Activated CD4-positive, alpha-beta memory T cell treated with anti-CD3 and anti-CD28 coated beads, Interleukin-2, amount 10 ng/mL, durations not matched to agents 7 days and 5 days (primary cell): ENCODE measurements at regions of chr1 and their contacts with region 1.

Region 1: GRCh38 chr1:101309334-101310311 is 72.8 kb downstream of the S1PR1 start:
- DNase-seq: peak; percentile 72
- H3K4me3 Mint-ChIP-seq: peak overlapping the region; percentile 74
- H3K27ac Mint-ChIP-seq: peak overlapping the region; percentile 92
- H3K4me1 Mint-ChIP-seq: peaks cover 62% of the 10 kb centered on the region
- H3K27me3 Mint-ChIP-seq: peaks cover 15% of the 10 kb centered on the region

Region 2: DNA sequence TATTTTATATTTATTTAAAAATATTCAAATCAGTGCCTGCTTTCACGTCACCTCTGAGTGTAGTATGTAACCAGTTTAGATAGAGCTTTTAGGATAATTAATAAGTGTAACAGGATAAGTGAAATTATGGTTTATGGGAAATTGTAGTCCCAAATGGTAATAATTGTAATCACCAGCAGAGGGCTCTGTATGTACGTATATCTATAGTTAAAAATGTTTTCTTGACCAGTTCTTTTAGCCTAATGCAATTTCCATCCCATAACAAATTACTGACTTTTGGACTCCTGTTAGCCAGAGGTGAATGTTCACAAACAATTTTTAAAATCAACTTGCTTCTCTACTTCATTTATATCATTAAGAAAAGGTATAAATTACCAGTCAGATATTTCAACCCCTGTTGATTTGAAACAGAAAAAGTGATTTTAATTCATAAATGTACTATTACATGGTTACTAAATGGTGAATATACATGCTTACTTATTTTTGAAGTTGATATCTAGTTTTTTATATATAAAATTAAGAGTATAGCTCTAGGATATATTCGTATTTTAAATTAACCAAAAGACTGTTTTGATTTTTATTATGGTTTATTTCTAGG is 388.4 kb before region 1 on chr1:
- CTCF ChIA-PET with region 1: interaction called, 11 read pairs
- POLR2A ChIA-PET with region 1: interaction called, 3 read pairs
- DNase-seq: no peak
- H3K4me3 Mint-ChIP-seq: no peak overlapping the region
- H3K27ac Mint-ChIP-seq: no peak overlapping the region
- H3K4me1 Mint-ChIP-seq: peaks cover 32% of the 10 kb centered on the region
- H3K27me3 Mint-ChIP-seq: no peaks in the 10 kb centered on the region

Region 3: DNA sequence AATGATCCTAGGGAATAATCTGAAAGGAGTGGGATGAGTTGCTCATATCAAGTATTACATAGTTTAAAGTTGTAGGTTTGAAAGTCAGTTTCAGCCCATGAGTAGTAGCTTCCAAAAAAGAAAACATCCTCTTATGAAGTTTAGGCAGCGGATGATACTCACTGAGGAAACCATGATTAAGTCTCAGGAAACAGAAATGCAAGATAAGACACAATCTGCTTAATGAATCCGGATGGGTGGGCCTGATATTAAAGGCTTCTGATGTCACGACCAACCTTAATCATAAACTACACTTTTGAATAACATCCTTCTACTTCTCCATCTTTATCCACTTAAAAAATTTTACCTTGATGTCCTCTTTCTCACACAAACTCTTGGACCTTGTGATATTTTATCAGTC is 11.0 kb before region 1 on chr1:
- CTCF ChIA-PET with region 1: interaction called, 72 read pairs
- POLR2A ChIA-PET with region 1: interaction called, 34 read pairs
- DNase-seq: no peak
- H3K4me3 Mint-ChIP-seq: no peak overlapping the region
- H3K27ac Mint-ChIP-seq: no peak overlapping the region
- H3K4me1 Mint-ChIP-seq: peaks cover 42% of the 10 kb centered on the region
- H3K27me3 Mint-ChIP-seq: peaks cover 24% of the 10 kb centered on the region

Region 4: GRCh38 chr1:101338714-101339430 is 29.2 kb after region 1 on chr1:
- CTCF ChIA-PET with region 1: interaction called, 13 read pairs
- POLR2A ChIA-PET with region 1: interaction called, 3 read pairs
- DNase-seq: no peak
- H3K4me3 Mint-ChIP-seq: no peak overlapping the region
- H3K27ac Mint-ChIP-seq: no peak overlapping the region
- H3K4me1 Mint-ChIP-seq: peaks cover 17% of the 10 kb centered on the region
- H3K27me3 Mint-ChIP-seq: peaks cover 5% of the 10 kb centered on the region

Region 5: GRCh38 chr1:101357444-101357986 is 47.9 kb after region 1 on chr1:
- CTCF ChIA-PET with region 1: interaction called, 152 read pairs
- POLR2A ChIA-PET with region 1: interaction called, 19 read pairs
- DNase-seq: peak; percentile 70
- H3K4me3 Mint-ChIP-seq: no peak overlapping the region
- H3K27ac Mint-ChIP-seq: no peak overlapping the region
- H3K4me1 Mint-ChIP-seq: peaks cover 8% of the 10 kb centered on the region
- H3K27me3 Mint-ChIP-seq: peaks cover 18% of the 10 kb centered on the region

Region 6: DNA sequence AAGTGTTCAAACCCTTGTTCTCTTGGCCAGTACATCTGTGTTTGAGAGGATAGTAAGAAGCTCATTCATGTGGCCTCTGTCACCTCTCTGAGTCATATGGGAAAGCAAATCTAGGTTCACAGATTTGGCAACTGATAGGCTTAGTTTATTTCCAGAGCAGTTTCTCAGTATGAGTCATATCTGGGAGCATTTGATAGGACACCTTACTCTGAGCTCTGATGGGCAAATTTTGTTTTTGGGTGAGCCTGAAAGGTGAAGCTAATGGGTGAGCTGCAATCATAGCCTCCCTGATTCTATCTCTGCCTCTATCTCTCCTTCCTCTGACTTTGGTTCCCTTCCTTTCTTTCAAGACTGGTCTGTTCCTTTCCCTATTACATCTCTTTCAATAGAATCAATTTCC is 61.6 kb after region 1 on chr1:
- CTCF ChIA-PET with region 1: interaction called, 16 read pairs
- POLR2A ChIA-PET with region 1: interaction called, 6 read pairs
- DNase-seq: peak; percentile 19
- H3K4me3 Mint-ChIP-seq: no peak overlapping the region
- H3K27ac Mint-ChIP-seq: peak overlapping the region; percentile 13
- H3K4me1 Mint-ChIP-seq: peaks cover 17% of the 10 kb centered on the region
- H3K27me3 Mint-ChIP-seq: peaks cover 9% of the 10 kb centered on the region

Region 7: DNA sequence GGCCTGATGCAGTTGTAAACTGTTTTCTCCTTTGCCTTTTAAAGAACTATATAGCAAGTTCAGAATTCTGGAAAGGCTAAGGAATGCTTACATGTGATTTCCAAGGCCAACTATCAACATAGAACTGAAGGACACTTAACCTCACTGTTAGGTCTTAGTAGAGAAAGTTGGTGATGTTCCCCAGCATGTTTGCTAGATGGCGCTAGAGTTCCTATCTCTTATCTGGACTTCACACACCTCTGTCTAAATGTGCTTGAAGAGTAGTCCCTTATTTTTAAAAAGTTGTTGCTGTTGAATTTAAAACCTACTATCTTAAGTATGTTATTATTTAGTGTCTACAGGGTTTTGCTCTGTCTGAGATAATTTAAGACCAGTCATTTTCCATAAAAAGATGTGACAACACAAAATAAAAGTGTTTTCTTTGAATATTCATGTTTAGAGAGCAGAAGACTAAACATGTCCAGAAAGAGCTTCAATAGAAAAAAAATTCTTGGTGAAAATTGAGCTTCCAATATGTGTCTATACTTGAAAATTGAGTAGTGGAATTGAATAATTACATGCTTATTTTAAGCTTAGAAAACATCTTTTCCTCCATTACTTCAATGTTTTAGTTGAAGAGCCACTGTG is 164.5 kb after region 1 on chr1:
- CTCF ChIA-PET with region 1: interaction called, 10 read pairs
- POLR2A ChIA-PET with region 1: no interaction called
- DNase-seq: no peak
- H3K4me3 Mint-ChIP-seq: no peak overlapping the region
- H3K27ac Mint-ChIP-seq: no peak overlapping the region
- H3K4me1 Mint-ChIP-seq: no peaks in the 10 kb centered on the region
- H3K27me3 Mint-ChIP-seq: peaks cover 7% of the 10 kb centered on the region